ENCODE measurements at regions of chr1 and their contacts with region 1.

Region 1: DNA sequence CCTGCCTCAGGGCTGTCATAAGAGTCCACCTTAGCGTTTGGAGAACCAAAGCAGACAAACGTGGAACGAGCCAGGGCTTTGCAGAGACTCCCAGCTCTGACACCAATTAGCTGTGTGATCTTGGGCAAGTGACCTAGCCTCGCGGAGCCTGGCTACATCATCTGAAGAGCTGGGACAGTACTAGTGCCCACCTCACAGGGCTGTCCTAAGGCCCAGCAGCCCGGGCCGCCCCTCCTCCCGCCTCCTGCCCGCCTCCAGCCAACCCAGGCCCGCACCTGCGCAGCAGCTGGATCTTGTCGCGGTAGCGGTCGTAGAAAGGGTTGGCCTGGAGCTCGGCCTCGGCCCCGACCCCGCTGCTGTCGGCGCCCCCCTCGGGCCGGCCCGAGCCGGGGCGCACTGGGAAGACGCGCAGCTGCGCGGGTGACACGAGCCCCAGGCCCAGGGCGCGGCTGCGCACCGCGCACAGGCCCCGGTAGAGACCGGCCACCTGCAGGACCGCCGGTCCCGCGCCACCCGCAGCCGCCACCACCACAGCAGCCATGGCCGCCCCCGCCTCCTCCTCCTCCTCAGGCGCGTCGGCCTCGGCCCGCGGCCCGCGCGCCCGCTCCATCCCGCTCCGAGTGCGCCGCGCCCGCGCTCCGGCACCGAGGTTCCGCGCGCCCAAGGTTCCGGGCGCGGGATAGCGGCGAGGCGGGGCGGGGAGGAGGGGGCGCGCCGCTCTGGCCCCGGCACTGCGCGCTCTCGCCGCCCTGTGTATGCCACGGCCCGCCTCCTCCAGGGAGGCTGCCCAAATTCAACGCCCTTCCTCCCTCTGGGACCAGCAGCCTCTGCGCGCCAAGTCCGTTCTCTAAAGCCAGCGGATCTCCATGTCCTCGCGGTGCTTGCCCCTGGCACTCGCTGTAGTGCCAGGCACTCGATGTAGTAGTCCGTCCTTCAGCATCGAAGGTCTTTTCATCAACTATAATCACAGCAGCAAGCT is at the start of gene ATPAF1:
- DNase-seq: peak; percentile 77
- ATAC-seq: peak; percentile 95
- H3K4me3 Mint-ChIP-seq: no peak within 1 kb of the TSS
- H3K27ac Mint-ChIP-seq: peak within 1 kb of the TSS; percentile 35
- H3K4me1 Mint-ChIP-seq: peaks cover 13% of the 10 kb centered on the region
- H3K27me3 Mint-ChIP-seq: no peaks in the 10 kb centered on the region
- CTCF ChIP-seq: no peak
- total RNA-seq, gene ATPAF1: 40.3 to 41.8 TPM

Region 2: DNA sequence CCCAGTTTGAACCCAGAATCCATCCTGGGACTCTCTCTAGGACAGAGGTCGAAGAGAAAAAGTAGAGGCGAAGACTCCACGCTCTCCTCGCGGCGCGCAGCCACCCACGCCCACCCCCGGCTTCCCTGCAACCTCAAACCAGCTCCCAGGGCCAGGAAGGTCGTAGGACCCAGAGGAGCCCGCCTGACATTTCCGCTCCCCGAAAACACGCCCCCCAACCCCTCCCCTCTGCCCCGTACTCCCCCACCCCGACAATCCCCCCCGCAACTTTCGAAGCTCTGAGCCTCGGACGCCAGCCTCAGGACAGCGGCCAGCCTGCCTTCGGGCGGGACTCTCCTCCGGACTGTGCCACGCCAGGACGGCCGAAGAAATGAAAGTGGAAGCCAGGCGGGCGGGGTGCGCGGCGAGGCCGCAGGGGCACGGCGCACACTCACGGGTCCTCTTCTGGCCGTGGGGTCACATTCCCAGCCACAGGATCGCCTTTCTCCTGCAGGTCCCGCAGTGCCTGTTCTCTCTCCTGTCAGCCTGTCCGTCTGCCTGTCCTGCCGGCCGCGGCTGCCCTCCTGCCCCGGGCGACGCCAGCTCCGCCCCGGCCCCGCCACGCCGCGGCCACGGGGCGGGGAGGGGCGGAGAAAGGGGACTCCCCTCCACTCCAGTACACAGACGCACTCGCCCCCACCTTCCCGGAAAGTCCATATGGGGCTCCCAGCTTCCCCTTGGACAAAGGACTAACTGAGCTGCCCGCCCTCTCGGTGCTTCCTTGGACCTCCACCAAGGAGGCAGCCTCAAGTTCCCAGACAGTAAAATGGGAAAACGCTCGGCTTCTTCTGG is 51.6 kb before region 1 on chr1 and contains the start of gene MOB3C:
- CTCF ChIA-PET with region 1: no interaction called
- POLR2A ChIA-PET with region 1: interaction called, 3 read pairs
- intact Hi-C with region 1: loop called (anchors 5 kb)
- DNase-seq: peak; percentile 74
- ATAC-seq: peak; percentile 65
- H3K4me3 Mint-ChIP-seq: peak within 1 kb of the TSS; percentile 88
- H3K27ac Mint-ChIP-seq: peak within 1 kb of the TSS; percentile 91
- H3K4me1 Mint-ChIP-seq: peaks cover 47% of the 10 kb centered on the region
- H3K27me3 Mint-ChIP-seq: no peaks in the 10 kb centered on the region
- CTCF ChIP-seq: no peak
- total RNA-seq, gene MOB3C: 6.3 to 8.7 TPM

Region 3: GRCh38 chr1:46718727-46719622 is 50.9 kb after region 1 on chr1 and contains the start of gene EFCAB14:
- CTCF ChIA-PET with region 1: no interaction called
- POLR2A ChIA-PET with region 1: no interaction called
- intact Hi-C with region 1: loop called (anchors 5 kb)
- DNase-seq: peak; percentile 99
- ATAC-seq: peak; percentile 100
- H3K4me3 Mint-ChIP-seq: peak within 1 kb of the TSS; percentile 85
- H3K27ac Mint-ChIP-seq: peak within 1 kb of the TSS; percentile 90
- H3K4me1 Mint-ChIP-seq: peaks cover 34% of the 10 kb centered on the region
- H3K27me3 Mint-ChIP-seq: no peaks in the 10 kb centered on the region
- CTCF ChIP-seq: no peak
- total RNA-seq, gene EFCAB14: 39.6 to 41.6 TPM